Spleen (tissue), 13 donors: ENCODE measurements at regions of chr20 and their contacts with region 1.

Region 1: DNA sequence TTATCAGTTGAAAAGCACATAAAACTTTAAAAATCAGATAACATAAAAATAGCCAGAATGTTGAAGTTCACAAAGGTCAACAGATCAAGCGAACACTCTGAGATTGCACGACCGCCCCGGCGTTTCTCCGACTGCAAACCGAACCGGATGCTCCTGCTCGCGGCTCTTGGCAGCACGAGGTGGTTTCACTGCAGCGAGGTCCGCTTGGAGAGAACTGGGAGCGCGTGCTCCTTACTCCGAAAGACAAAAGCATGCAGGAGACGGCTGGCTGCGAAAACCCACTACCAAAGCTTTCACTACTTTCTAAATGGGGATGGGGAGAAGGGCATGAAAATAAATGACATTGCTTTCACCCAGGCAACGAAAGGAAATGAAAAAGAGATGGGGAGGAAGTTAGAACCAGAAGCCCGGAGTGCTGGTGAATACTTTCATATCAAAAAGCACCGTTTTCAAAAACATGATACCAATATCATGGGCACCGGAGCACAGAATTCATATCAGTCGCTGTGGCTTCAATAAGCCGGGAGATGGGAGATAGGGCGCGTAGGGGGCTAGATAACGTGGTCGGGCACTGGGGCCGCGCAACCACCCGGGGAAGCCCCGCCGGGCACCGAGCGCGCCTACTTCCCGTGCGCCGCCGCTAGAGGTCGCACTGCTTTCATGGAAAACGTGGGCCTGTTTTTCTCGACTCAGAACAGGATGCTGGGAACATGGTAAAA is 8.3 kb upstream of the ANKRD60 start:
- DNase-seq: peak; percentile 94
- H3K4me3 ChIP-seq: peak overlapping the region; percentile 26 to 75 (median 52)
- H3K27ac ChIP-seq: peak overlapping the region in 5 of 8 donors; percentile 37 to 75 (median 62)
- H3K4me1 ChIP-seq: peaks cover 0 to 17% (median 7%) of the 10 kb centered on the region in 6 donors
- H3K27me3 ChIP-seq: no peaks in the 10 kb centered on the region
- CTCF ChIP-seq: peak; percentile 81 to 99 (median 95)
- POLR2A ChIP-seq: no peak

Region 2: DNA sequence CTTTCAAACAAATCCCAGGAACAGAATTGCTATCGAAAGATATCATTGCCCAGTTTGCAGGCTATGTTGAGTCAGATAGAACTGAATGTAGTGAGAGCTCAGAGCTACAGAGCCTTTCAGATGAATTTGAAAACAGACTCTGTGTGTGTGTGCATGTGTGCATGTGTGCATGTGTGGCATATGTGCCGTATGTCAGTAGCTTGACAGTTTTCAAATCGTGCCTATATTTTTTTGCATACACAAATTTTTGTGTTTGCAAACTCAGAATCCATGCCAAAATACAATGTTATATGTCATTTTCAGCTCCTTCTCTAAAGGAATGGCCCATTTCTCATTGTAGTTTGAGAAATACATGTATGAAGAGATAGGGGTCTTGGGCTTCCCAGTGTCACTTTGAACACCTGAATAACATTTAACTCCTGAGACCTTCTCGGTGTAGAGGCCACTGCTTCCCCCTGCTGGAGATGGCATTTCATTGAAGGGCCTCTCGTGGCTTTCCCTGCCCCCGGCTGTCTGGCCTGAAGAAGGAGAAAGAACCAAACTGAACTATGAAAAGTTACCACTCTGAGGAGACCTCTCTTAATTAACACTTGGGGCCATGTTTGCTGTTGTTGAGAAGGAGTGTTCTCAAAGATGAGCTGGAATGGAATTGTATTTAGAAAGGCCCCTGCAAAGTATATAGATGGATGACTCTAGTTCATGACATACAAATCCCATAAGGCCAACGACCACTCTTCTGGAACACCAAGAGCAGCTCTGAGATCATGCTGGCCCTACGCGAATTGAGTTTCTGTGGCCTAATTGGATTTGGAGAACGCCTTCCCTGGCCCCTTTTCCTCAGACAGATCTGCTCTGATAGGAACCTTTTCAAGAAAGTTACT is 211.0 kb after region 1 on chr20:
- intact Hi-C with region 1: loop called (anchors 5 kb)
- DNase-seq: no peak
- H3K4me3 ChIP-seq: no peak overlapping the region
- H3K27ac ChIP-seq: no peak overlapping the region
- H3K4me1 ChIP-seq: peaks cover 0 to 10% (median 0%) of the 10 kb centered on the region in 6 donors
- H3K27me3 ChIP-seq: no peaks in the 10 kb centered on the region
- CTCF ChIP-seq: peak in 9 of 11 experiments; percentile 21 to 71 (median 53)
- POLR2A ChIP-seq: no peak

Region 3: GRCh38 chr20:58650776-58651558 is 414.2 kb after region 1 on chr20 and contains the start of gene STX16:
- intact Hi-C with region 1: loop called (anchors 5 kb)
- DNase-seq: peak; percentile 97
- H3K4me3 ChIP-seq: peak within 1 kb of the TSS; percentile 84 to 100 (median 97)
- H3K27ac ChIP-seq: peak within 1 kb of the TSS; percentile 91 to 98 (median 94)
- H3K4me1 ChIP-seq: peaks cover 27 to 52% (median 45%) of the 10 kb centered on the region in 6 donors
- H3K27me3 ChIP-seq: peaks cover 0 to 8% (median 0%) of the 10 kb centered on the region in 7 donors
- CTCF ChIP-seq: peak in 10 of 11 experiments; percentile 31 to 79 (median 65)
- POLR2A ChIP-seq: peak; percentile 20 to 85 (median 25)
- total RNA-seq, gene STX16: 62.6 to 105 (median 83.6) TPM